Activated naive CD4-positive, alpha-beta T cell treated with anti-CD3 and anti-CD28 coated beads for 36 hours (primary cell): ENCODE measurements at regions of chr3 and their contacts with region 1.

Region 1: DNA sequence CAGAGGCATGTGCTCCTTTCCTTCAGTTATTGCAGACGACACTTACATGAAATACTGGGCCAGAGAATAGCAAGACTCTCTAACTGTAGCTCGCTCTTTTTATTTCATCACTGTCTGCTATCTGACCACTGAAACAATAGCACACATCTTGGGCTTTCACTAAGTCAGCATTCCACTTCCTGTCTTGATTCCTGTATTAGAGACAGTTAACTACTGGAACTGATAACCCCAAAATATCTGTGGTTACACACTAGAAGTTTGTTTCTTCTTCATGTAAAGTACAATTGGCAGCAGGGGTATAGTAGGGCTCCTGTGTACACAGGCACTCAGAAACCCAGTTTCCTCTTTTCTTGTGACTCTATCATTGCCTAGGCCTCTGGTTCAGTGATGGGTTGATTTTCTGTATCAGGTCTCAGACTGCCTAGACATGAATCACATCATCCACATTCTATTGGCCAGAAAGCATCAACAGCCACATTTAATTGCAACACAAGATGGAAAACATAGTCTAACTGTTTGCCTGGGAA is 230.2 kb upstream of the CD96 start:
- DNase-seq: no peak
- H3K4me3 Mint-ChIP-seq: no peak overlapping the region
- H3K27ac Mint-ChIP-seq: peak overlapping the region; percentile 37
- H3K4me1 Mint-ChIP-seq: peaks cover 33% of the 10 kb centered on the region
- H3K27me3 Mint-ChIP-seq: no peaks in the 10 kb centered on the region

Region 2: DNA sequence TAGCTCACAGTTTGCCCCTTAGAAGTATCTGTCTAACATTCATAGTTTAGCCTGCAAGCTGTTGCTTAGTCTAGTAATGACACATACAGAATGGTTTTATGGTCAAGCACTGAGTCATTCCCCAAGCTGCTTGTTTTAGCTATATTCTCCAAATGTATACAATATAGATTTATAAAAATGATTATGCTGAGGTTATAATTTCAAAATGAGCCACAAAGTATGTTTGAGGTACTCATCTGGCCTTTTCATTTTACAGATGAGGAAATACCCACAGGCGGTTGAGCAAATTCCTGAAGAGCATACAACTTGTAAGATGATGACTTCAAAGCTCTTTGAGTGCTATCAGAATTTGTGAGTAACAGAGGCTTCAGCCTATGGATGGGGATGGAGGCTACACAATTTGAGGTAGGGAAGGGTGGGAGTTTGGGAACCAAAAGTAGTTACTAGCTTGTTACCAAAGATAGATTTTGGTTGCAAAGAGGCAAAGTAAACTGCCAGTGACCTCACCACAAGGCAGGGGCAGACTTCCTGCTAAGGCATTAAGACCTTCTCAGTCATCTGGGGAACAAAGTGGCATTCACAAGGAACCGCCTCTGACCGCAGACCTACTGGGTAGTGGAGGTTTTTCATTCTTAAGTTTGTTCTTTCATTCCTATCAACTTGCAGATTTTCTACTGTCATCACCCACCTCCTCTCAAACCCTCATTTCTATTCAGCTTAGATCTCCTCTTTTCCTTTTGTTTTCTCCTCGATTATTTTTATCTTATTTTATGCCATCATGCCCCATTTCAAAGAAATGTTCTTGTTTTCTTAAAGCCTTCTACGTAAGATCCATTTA is 497.4 kb before region 1 on chr3:
- CTCF ChIA-PET with region 1: no interaction called
- intact Hi-C with region 1: loop called (anchors 10 kb)
- DNase-seq: peak; percentile 16
- H3K4me3 Mint-ChIP-seq: no peak overlapping the region
- H3K27ac Mint-ChIP-seq: no peak overlapping the region
- H3K4me1 Mint-ChIP-seq: peaks cover 3% of the 10 kb centered on the region
- H3K27me3 Mint-ChIP-seq: peaks cover 18% of the 10 kb centered on the region

Region 3: DNA sequence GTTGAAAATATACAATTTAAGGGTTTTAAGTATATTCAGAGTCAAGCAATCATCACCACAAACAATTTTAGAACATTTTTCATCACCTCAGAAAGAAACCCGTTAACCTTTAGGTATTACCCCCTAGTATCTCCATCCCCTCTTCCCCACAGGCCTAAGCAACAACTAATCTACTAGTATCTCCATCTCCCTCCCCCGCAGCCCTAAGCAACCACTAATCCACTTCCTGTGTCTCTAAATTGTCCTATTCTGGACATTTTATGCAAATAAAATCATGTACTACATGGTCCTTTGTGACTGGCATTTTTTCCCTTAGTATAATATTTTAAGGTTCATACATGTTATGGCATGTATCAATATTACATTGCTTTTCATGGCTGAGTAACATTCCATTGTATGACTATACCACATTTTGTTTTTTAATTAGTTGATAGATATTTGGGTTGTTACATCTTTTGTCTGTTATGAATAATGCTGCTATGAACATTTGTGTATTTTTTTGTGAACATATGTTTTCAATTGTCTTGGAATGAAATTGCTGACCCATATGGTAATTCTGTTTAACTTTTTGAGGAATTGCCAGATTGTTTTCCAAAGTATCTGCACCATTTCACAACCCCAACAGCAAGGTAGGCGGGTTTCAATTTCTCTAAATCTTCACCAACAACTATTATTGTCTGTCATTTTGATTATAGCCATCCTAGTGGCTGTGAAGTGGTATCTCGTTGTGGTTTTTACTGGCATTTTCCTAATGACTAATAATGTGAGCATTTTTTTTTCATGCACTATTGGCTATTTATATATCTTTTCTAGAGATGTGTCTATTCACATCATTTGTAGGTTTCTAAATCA is 14.6 kb after region 1 on chr3:
- CTCF ChIA-PET with region 1: interaction called, 6 read pairs
- intact Hi-C with region 1: loop called (anchors 1 kb)
- DNase-seq: no peak
- H3K4me3 Mint-ChIP-seq: no peak overlapping the region
- H3K27ac Mint-ChIP-seq: no peak overlapping the region
- H3K4me1 Mint-ChIP-seq: peaks cover 34% of the 10 kb centered on the region
- H3K27me3 Mint-ChIP-seq: no peaks in the 10 kb centered on the region

Region 4: DNA sequence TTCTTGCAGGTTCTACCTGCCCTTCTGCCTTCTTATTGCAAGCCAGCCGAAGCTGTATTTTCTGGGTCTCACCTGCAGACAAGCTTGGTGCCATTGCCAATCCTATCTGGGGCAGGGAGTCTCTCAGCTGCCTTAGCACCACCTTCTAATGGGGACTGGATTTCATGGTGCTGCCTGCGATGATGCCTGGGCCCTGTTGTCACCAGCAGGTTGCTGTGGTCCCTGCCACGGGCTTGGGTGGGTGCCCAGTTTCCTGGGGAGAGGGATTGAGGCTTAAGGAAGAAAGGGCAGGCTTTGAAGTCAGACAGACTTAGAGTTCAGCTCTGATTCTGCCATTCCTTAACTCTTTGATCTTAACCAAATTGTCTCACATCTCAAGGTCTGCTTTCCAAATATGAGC is 142.8 kb after region 1 on chr3:
- CTCF ChIA-PET with region 1: no interaction called
- intact Hi-C with region 1: no loop called
- DNase-seq: no peak
- H3K4me3 Mint-ChIP-seq: no peak overlapping the region
- H3K27ac Mint-ChIP-seq: no peak overlapping the region
- H3K4me1 Mint-ChIP-seq: peaks cover 6% of the 10 kb centered on the region
- H3K27me3 Mint-ChIP-seq: no peaks in the 10 kb centered on the region

Region 5: DNA sequence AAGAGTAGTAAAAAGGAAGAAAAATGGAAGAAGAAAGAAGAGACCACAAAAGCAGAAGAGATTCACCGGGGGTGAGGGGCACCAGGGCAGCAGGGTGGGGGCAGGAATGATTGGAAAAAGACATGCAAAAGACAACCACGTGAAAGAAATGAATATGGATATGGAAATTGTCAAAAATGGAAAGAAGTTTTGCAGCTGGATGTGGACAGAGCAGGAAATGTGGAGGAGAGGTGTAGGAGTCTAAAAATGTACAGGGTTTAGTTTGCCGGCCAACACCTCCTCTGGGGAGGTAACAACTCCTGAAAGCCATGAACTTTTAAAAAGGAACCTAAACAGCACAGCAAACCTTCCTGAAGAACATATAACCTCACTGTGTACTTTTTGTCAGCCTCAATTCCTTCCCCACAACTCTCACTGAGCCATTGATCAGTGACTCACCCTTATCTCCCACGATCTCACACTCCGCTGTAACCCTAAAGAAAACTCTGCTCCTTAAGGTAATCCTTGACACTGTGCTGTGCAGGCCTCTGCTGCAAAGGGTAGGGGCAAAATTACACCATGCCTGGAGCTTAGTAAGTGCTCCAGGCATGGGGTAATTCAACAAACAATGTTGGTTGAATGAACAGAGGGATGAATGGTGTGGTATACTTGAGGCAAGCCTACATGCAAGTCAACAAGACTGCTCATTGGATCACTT is 1799.4 kb after region 1 on chr3:
- CTCF ChIA-PET with region 1: no interaction called
- intact Hi-C with region 1: loop called (anchors 5 kb)
- DNase-seq: no peak
- H3K4me3 Mint-ChIP-seq: no peak overlapping the region
- H3K27ac Mint-ChIP-seq: no peak overlapping the region
- H3K4me1 Mint-ChIP-seq: peaks cover 28% of the 10 kb centered on the region
- H3K27me3 Mint-ChIP-seq: no peaks in the 10 kb centered on the region